GM12878 (cell line): ENCODE measurements at regions of chr6 and their contacts with region 1.

Region 1: GRCh38 chr6:34236131-34236996 is at the start of gene HMGA1:
- DNase-seq: peak; percentile 51
- ATAC-seq: peak; percentile 83
- H3K4me3 ChIP-seq: peak within 1 kb of the TSS; percentile 93
- H3K27ac ChIP-seq: peak within 1 kb of the TSS; percentile 94
- H3K4me1 ChIP-seq: peaks cover 21% of the 10 kb centered on the region
- H3K27me3 ChIP-seq: no peaks in the 10 kb centered on the region
- CTCF ChIP-seq: no peak
- EP300 ChIP-seq: no peak
- POLR2A ChIP-seq: peak; percentile 96
- RAD21 ChIP-seq: no peak
- polyA plus RNA-seq, gene HMGA1: 13.4 to 38.0 TPM

Region 2: GRCh38 chr6:34196126-34196830 is 40.1 kb before region 1 on chr6:
- CTCF ChIA-PET with region 1: interaction called, 6 read pairs
- POLR2A ChIA-PET with region 1: interaction called, 11 read pairs
- RAD21 ChIA-PET with region 1: interaction called, 10 read pairs
- SMC1A ChIA-PET with region 1: interaction called, 3 read pairs
- in situ Hi-C with region 1: no loop called
- intact Hi-C with region 1: no loop called
- DNase-seq: peak; percentile 28
- ATAC-seq: peak; percentile 99
- H3K4me3 ChIP-seq: peak overlapping the region; percentile 64
- H3K27ac ChIP-seq: no peak overlapping the region
- H3K4me1 ChIP-seq: peaks cover 8% of the 10 kb centered on the region
- H3K27me3 ChIP-seq: peaks cover 0 to 2% of the 10 kb centered on the region in 2 experiments; a peak in 1 of 4 replicates
- CTCF ChIP-seq: peak; percentile 94 to 98 (median 96)
- EP300 ChIP-seq: 0 out of 4 replicates have a peak, but pooled peaks of 1 of the 2 experiments have one; percentile 42
- POLR2A ChIP-seq: peak; percentile 77
- RAD21 ChIP-seq: peak; percentile 86

Region 3: GRCh38 chr6:34223956-34224940 is 12.1 kb before region 1 on chr6:
- CTCF ChIA-PET with region 1: interaction called, 7 read pairs
- POLR2A ChIA-PET with region 1: interaction called, 20 read pairs
- RAD21 ChIA-PET with region 1: interaction called, 17 read pairs
- SMC1A ChIA-PET with region 1: interaction called, 10 read pairs
- in situ Hi-C with region 1: no loop called
- intact Hi-C with region 1: loop called (anchors 1 kb)
- DNase-seq: peak; percentile 88
- ATAC-seq: peak; percentile 97
- H3K4me3 ChIP-seq: peak overlapping the region; percentile 68
- H3K27ac ChIP-seq: peak overlapping the region; percentile 96
- H3K4me1 ChIP-seq: peaks cover 31% of the 10 kb centered on the region
- H3K27me3 ChIP-seq: no peaks in the 10 kb centered on the region
- CTCF ChIP-seq: no peak
- EP300 ChIP-seq: peak in 1 of 2 experiments; percentile 42; a peak in 2 of 4 replicates
- POLR2A ChIP-seq: peak; percentile 84
- RAD21 ChIP-seq: no peak